Activated CD4-positive, alpha-beta memory T cell treated with anti-CD3 and anti-CD28 coated beads, Interleukin-2, amount 10 ng/mL, durations not matched to agents 7 days and 5 days (primary cell): ENCODE measurements at regions of chr12 and their contacts with region 1.

Region 1: GRCh38 chr12:50074936-50075807 is 10.0 kb upstream of the SMARCD1 start:
- DNase-seq: peak; percentile 83
- H3K4me3 Mint-ChIP-seq: no peak overlapping the region
- H3K27ac Mint-ChIP-seq: no peak overlapping the region
- H3K4me1 Mint-ChIP-seq: peaks cover 6% of the 10 kb centered on the region
- H3K27me3 Mint-ChIP-seq: peaks cover 4% of the 10 kb centered on the region

Region 2: GRCh38 chr12:49825360-49825754 is 249.8 kb before region 1 on chr12:
- CTCF ChIA-PET with region 1: no interaction called
- POLR2A ChIA-PET with region 1: no interaction called
- DNase-seq: no peak
- H3K4me3 Mint-ChIP-seq: no peak overlapping the region
- H3K27ac Mint-ChIP-seq: no peak overlapping the region
- H3K4me1 Mint-ChIP-seq: peaks cover 24% of the 10 kb centered on the region
- H3K27me3 Mint-ChIP-seq: peaks cover 26% of the 10 kb centered on the region

Region 3: DNA sequence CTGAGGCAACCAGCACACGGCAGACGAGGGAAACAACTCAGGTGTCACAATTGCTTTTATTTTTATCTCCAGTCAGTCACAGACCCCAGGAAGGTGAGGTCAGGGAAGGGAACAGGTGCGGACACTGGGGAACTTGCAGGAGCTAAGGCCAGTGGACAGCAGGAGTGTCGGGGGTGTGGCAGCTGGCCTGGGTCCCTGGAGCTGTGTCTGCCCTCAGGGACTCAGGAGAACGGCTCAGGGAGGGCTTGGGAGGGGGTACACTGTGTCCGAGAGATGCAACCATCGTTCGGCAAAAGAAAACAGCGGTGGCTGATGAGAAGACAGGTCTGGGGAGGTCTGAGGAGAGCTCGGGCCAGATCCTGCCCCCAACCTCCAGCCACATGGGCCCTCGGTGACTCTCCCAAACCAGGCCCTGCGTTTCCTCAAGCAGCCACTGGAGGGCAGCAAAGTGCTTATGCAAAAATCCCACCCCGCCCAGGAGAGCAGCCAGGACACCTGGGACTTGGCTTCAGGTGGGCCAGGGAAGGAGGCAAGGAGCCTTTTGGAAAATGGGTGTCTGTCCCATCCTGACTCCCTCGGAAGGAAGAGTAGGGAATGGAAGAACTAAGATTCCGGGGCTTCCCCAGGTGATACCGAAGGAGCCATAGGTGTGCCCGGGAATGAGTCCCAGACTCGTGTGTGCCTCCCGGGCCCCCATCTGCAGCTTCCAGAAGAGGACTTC is 208.2 kb before region 1 on chr12:
- CTCF ChIA-PET with region 1: interaction called, 10 read pairs
- POLR2A ChIA-PET with region 1: no interaction called
- DNase-seq: peak; percentile 78
- H3K4me3 Mint-ChIP-seq: no peak overlapping the region
- H3K27ac Mint-ChIP-seq: no peak overlapping the region
- H3K4me1 Mint-ChIP-seq: no peaks in the 10 kb centered on the region
- H3K27me3 Mint-ChIP-seq: peaks cover 9% of the 10 kb centered on the region

Region 4: DNA sequence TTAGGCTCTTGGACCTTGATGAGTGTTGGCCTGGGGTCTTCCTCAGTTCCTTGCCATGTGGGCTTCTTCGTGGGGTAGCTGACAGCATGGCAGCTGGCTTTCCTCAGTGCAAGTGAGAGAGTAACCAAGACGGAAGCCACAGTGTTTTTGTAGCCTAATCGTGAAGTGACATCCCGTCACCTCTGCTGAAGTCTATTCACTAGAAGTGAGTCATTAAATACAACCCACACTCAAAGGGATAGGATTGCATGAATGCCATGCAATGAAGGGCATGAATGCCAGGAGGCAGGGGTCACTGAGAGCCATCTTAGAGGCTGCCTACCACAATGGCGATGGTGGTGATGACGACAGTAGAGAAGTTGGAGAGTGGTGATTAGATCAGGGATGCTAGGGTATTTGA is 31.3 kb before region 1 on chr12:
- CTCF ChIA-PET with region 1: interaction called, 46 read pairs
- POLR2A ChIA-PET with region 1: no interaction called
- DNase-seq: no peak
- H3K4me3 Mint-ChIP-seq: no peak overlapping the region
- H3K27ac Mint-ChIP-seq: no peak overlapping the region
- H3K4me1 Mint-ChIP-seq: peaks cover 15% of the 10 kb centered on the region
- H3K27me3 Mint-ChIP-seq: peaks cover 9% of the 10 kb centered on the region

Region 5: DNA sequence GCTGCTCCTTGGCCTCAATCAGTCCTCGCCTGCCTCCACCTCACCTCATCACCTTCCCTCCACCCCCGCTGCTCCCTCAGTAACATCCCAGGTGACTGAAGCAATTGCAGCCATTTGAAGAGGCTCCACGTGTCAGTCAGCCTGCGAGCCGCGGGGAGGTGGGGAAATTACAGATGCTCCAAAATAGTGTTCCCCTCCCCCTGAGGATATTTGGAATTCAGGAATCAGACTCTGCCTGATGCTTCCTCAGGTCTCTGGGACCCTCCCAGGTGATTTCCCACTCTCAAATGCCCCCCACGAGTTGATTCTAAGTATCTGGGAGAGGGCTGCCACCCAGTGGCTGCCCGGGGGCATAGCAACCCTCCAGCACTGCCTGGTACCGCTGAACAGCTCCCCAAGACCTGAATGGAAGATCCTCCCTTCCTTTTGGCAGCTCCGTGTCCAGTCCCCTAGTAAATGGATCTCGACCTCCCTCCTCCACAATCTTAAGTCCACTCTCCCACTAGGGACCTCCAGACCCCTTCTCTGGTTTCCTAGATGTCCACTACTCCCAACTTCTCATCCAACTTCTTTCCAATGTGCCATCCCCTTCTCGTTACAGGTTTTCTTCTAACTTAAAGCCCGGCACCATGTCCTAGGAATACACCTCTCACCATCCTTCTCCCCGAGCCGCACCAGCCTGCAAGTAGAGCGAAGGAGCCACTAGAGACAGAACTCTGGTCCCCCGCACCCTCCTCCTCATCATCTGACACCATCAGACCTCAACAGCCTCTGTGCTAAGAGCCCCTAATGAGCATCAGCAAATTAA is 19.1 kb before region 1 on chr12:
- CTCF ChIA-PET with region 1: interaction called, 41 read pairs
- POLR2A ChIA-PET with region 1: no interaction called
- DNase-seq: peak; percentile 56
- H3K4me3 Mint-ChIP-seq: peak overlapping the region; percentile 25
- H3K27ac Mint-ChIP-seq: no peak overlapping the region
- H3K4me1 Mint-ChIP-seq: peaks cover 28% of the 10 kb centered on the region
- H3K27me3 Mint-ChIP-seq: peaks cover 58% of the 10 kb centered on the region

Region 6: DNA sequence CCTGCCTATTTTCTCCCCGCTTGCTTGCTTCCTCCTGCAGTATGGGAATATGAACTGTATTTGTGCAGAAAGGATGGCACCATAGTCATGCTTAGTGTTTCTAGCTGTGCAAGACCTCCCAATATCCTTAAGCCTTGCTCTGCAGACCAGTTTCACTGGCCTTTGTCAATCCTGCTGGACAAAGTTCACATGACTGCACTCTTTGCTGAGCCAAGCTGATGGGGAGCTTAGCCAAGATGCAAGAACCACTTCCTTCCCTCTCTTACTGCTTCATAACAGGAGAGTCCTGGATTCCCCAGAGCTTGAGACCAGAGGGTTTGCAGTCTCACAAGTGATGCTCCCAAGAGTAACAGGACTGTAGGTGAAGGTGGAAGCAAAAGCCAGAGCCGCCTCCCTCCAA is 14.0 kb before region 1 on chr12:
- CTCF ChIA-PET with region 1: interaction called, 41 read pairs
- POLR2A ChIA-PET with region 1: no interaction called
- DNase-seq: no peak
- H3K4me3 Mint-ChIP-seq: no peak overlapping the region
- H3K27ac Mint-ChIP-seq: no peak overlapping the region
- H3K4me1 Mint-ChIP-seq: peaks cover 21% of the 10 kb centered on the region
- H3K27me3 Mint-ChIP-seq: peaks cover 39% of the 10 kb centered on the region

Region 7: GRCh38 chr12:50174971-50175715 is 100.0 kb after region 1 on chr12:
- CTCF ChIA-PET with region 1: interaction called, 15 read pairs
- POLR2A ChIA-PET with region 1: no interaction called
- DNase-seq: no peak
- H3K4me3 Mint-ChIP-seq: no peak overlapping the region
- H3K27ac Mint-ChIP-seq: no peak overlapping the region
- H3K4me1 Mint-ChIP-seq: peaks cover 2% of the 10 kb centered on the region
- H3K27me3 Mint-ChIP-seq: no peaks in the 10 kb centered on the region